ENCODE measurements at regions of chr10 and their contacts with region 1.

Region 1: GRCh38 chr10:6704896-6705295 is 124.8 kb upstream of the PRKCQ start:
- DNase-seq: no peak
- H3K4me3 ChIP-seq: no peak overlapping the region
- H3K27me3 ChIP-seq: peaks cover 4% of the 10 kb centered on the region; the same call in 1 of the 2 replicates
- CTCF ChIP-seq: no peak

Region 2: DNA sequence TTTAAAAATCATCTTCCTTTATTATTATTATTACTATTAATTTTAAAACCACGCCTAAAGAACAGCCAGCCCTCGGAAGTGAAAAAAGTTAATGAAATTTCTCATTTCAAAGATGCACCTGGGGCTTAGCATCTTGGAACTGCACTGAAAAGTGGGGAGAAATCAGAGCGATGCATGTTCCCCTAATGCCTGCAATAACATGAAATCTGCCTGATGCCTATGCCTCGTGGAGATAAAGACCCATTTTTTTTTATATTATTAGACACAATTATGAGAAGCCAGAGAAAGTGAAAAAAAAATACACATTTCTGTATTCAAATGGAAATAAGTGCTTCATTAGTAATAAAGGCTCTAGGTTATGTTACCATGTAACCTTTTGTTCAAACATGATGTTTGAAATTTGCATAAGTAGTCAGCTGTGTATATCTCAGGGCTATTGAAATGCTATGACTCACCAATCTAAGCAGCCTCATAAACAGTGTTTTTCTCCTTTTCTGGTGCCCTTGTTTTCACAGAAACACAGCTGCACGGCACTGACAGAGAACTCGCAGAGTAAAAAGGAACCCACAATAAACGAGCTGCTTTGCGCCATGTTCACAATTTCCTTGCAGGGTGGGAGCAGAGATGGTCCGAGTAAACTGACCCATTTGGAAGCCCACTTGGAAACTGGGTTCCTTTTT is 51.0 kb after region 1 on chr10:
- CTCF ChIA-PET with region 1: no interaction called
- POLR2A ChIA-PET with region 1: no interaction called
- DNase-seq: peak; percentile 54
- H3K4me3 ChIP-seq: no peak overlapping the region
- H3K27me3 ChIP-seq: no peaks in the 10 kb centered on the region
- CTCF ChIP-seq: no peak

Region 3: GRCh38 chr10:8428654-8429053 is 1723.8 kb after region 1 on chr10:
- CTCF ChIA-PET with region 1: no interaction called
- POLR2A ChIA-PET with region 1: interaction called, 15 read pairs
- DNase-seq: no peak
- H3K4me3 ChIP-seq: no peak overlapping the region
- H3K27me3 ChIP-seq: no peaks in the 10 kb centered on the region
- CTCF ChIP-seq: no peak

Measured in BJ (cell line).